Esophagus squamous epithelium (tissue), 5 donors: ENCODE measurements at regions of chr14 and their contacts with region 1.

Region 1: GRCh38 chr14:75982266-75983018 is 647 bp upstream of the TGFB3 start:
- DNase-seq: no peak
- H3K4me3 ChIP-seq: peak overlapping the region; percentile 63 to 91 (median 72)
- H3K27ac ChIP-seq: peak overlapping the region; percentile 88 to 97 (median 92)
- H3K4me1 ChIP-seq: peaks cover 13 to 74% (median 29%) of the 10 kb centered on the region in 3 donors
- H3K27me3 ChIP-seq: no peaks in the 10 kb centered on the region
- CTCF ChIP-seq: peak in 5 of 6 experiments; percentile 27 to 58 (median 47)
- POLR2A ChIP-seq: no peak

Region 2: DNA sequence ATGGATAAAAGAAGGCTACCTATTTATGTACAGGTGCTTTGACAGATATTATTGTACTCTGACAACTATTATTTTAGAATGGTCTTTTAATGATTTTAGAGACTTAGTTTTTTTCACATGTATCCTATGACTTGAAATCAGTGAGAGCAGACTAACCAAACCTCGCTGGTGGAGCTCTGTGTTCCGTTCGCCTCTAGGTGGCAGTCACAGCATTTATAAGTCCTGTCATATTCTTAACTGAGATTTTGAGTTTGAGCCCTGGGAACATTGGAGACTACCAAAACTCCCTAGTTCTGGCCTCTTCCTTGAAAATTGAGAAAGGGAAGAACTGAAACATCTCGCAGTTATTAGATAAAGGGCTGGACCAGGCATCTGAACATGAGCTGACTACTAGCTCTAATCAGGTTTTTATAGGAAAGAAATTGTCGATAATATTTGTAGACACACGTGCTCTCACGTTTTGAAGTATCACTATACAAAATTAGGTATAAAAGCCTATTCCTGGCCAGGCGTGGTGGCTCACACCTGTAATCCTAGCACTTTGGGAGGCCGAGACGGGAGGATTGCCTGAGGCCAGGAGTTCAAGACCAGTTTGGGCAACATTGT is 273.1 kb before region 1 on chr14:
- intact Hi-C with region 1: loop called (anchors 5 kb)
- DNase-seq: no peak
- H3K4me3 ChIP-seq: no peak overlapping the region
- H3K27ac ChIP-seq: no peak overlapping the region
- H3K4me1 ChIP-seq: peaks cover 6 to 21% (median 11%) of the 10 kb centered on the region in 3 donors
- H3K27me3 ChIP-seq: no peaks in the 10 kb centered on the region
- CTCF ChIP-seq: peak; percentile 60 to 76 (median 70)
- POLR2A ChIP-seq: no peak

Region 3: GRCh38 chr14:75906676-75907280 is 75.7 kb before region 1 on chr14:
- intact Hi-C with region 1: loop called (anchors 5 kb)
- DNase-seq: no peak
- H3K4me3 ChIP-seq: no peak overlapping the region
- H3K27ac ChIP-seq: peak overlapping the region in 2 of 4 donors; percentile 23 to 45
- H3K4me1 ChIP-seq: peaks cover 0 to 12% (median 0%) of the 10 kb centered on the region in 3 donors
- H3K27me3 ChIP-seq: no peaks in the 10 kb centered on the region
- CTCF ChIP-seq: peak; percentile 73 to 92 (median 84)
- POLR2A ChIP-seq: no peak